CD8-positive, alpha-beta T cell (primary cell): ENCODE measurements at regions of chr19 and their contacts with region 1.

Region 1: DNA sequence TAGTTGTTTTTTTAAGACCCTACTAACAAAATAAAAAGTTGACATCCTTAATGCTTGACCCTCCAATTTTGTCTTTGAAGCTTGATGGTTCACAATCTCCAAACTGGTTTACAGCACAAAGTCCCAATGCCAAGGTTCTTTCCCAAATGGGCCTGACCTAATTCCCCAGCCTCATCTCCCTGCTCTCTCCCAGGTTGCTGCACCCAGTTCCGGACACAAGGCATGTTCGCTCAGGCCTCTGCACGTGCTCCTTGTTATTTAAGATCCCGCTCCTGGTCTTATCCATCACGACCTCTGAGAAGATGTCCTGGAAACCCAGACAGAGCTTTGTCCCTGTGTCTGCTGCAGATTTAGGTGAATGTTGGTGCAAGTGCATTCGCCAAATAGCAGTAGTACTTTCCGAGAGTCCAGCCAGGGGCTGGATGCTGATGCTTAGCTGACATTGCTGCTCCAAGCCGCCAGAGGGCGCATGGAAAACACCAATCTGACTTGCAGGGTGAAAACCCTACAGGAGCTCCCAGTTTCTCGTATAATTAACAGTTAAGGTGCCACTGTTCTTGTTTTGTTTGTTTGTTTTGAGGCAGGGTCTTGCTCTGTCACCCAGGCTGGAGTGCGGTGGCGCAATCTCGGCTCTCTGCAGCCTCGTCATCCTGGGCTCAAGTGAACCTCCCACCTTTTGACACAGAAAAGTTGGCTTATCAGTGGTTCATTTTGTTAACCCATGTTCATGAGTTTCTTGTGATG is 18.5 kb downstream of the LYPD3 start:
- DNase-seq: peak; percentile 58 to 91 (median 82)
- ATAC-seq: peak; percentile 89
- H3K4me3 ChIP-seq: no peak overlapping the region
- H3K4me3 Mint-ChIP-seq: no peak overlapping the region
- H3K27ac ChIP-seq: no peak overlapping the region
- H3K27ac Mint-ChIP-seq: peak overlapping the region; percentile 87
- H3K4me1 ChIP-seq: peaks cover 5% of the 10 kb centered on the region
- H3K4me1 Mint-ChIP-seq: peaks cover 23% of the 10 kb centered on the region
- H3K27me3 ChIP-seq: no peaks in the 10 kb centered on the region
- H3K27me3 Mint-ChIP-seq: no peaks in the 10 kb centered on the region
- CTCF ChIP-seq: peak; percentile 97

Region 2: GRCh38 chr19:43457809-43458208 is 10.9 kb after region 1 on chr19:
- CTCF ChIA-PET with region 1: interaction called, 40 read pairs
- POLR2A ChIA-PET with region 1: no interaction called
- intact Hi-C with region 1: no loop called
- DNase-seq: no peak
- ATAC-seq: no peak
- H3K4me3 ChIP-seq: no peak overlapping the region
- H3K4me3 Mint-ChIP-seq: no peak overlapping the region
- H3K27ac ChIP-seq: no peak overlapping the region
- H3K27ac Mint-ChIP-seq: no peak overlapping the region
- H3K4me1 ChIP-seq: peaks cover 8% of the 10 kb centered on the region
- H3K4me1 Mint-ChIP-seq: peaks cover 18% of the 10 kb centered on the region
- H3K27me3 ChIP-seq: no peaks in the 10 kb centered on the region
- H3K27me3 Mint-ChIP-seq: no peaks in the 10 kb centered on the region
- CTCF ChIP-seq: no peak

Region 3: GRCh38 chr19:43474986-43475705 is 28.2 kb after region 1 on chr19:
- CTCF ChIA-PET with region 1: interaction called, 16 read pairs
- POLR2A ChIA-PET with region 1: interaction called, 7 read pairs
- intact Hi-C with region 1: loop called in 1 of 2 experiments (anchors 1 kb)
- DNase-seq: peak; percentile 92 to 99 (median 96)
- ATAC-seq: peak; percentile 84
- H3K4me3 ChIP-seq: peak overlapping the region; percentile 8 to 48
- H3K4me3 Mint-ChIP-seq: peak overlapping the region; percentile 82
- H3K27ac ChIP-seq: peak overlapping the region; percentile 72 to 89
- H3K27ac Mint-ChIP-seq: peak overlapping the region; percentile 97
- H3K4me1 ChIP-seq: peaks cover 48% of the 10 kb centered on the region
- H3K4me1 Mint-ChIP-seq: peaks cover 42% of the 10 kb centered on the region
- H3K27me3 ChIP-seq: no peaks in the 10 kb centered on the region
- H3K27me3 Mint-ChIP-seq: no peaks in the 10 kb centered on the region
- CTCF ChIP-seq: no peak

Region 4: DNA sequence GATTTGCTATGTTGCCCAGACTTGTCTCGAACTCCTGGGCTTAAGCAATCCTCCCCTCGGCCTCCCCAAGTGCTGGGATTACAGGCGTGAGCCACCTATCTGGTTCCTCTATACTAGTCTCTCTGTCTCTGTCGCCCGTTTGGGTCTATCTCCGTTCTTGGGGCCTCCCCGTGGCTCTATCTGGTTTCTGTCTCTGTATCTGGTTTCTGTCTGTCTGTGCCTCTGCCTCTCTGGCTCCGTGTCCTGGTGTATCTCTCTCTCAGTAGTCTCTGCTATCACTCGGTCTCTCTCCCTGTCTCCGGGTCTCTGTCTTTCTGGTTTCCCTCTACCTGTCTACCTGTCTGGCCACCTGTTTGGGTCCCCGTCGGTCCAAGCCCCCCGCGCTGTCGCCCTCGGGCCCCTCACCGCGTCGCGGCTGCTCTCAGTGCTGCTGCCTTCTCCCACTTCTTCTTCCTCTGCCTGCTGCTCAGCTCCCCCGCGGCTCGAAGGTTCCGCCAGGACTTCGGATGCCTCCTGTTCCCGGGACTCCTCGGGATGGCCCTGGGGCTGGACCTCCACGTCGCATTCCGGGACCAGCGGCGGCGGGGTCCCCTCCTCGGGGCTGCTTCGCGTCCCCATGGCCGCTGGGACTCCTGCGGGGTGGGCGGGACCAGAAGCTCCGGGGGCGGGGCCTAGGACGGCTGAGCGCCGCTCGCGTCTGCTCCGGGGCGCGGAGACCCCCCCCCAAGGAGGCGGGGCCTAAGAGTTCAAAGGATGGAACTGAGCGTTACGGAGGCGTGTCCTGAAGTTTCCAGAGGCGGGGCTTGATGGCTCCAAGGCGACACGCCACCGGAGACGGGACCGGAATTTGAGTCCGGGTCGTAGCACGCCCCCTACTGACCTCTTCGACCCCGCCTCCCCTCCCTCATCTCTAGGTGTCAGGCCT is 56.8 kb after region 1 on chr19:
- CTCF ChIA-PET with region 1: interaction called, 38 read pairs
- POLR2A ChIA-PET with region 1: interaction called, 12 read pairs
- intact Hi-C with region 1: loop called (anchors 1 kb)
- DNase-seq: peak; percentile 98 to 100 (median 99)
- ATAC-seq: peak; percentile 95
- H3K4me3 ChIP-seq: peak overlapping the region; percentile 97
- H3K4me3 Mint-ChIP-seq: peak overlapping the region; percentile 97
- H3K27ac ChIP-seq: peak overlapping the region; percentile 84 to 86
- H3K27ac Mint-ChIP-seq: peak overlapping the region; percentile 96
- H3K4me1 ChIP-seq: peaks cover 19% of the 10 kb centered on the region
- H3K4me1 Mint-ChIP-seq: peaks cover 34% of the 10 kb centered on the region
- H3K27me3 ChIP-seq: no peaks in the 10 kb centered on the region
- H3K27me3 Mint-ChIP-seq: no peaks in the 10 kb centered on the region
- CTCF ChIP-seq: no peak

Region 5: DNA sequence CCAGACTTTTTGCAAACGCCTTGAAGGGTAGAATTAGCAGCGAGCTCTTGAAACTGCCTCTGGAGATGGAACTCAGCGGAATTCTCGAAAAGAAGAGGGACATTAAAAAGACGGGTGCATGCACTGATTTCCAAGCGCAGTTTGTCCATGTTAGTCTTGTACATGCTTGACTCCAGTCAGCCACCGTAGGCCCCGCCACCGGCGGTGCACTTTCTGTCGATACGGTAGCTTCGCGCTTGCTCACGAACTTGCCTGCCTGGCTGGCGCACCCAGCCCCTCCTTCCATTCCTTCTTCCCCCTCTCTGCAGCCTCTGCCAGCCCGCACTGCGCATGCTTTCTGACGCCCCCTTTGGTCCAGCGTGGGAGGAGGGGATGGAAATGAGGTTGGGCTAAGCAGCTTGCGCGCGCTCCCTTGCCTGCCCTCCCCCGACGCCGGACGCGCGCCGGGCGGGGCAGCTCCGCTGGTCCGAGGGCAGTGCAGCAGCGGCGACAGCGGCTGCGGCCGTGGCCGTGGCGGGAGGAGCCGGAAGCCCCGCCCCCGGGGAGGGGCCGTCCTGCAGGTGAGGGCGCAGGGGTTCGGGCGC is 86.1 kb after region 1 on chr19 and contains the start of gene ZNF575:
- CTCF ChIA-PET with region 1: interaction called, 18 read pairs
- POLR2A ChIA-PET with region 1: interaction called, 4 read pairs
- intact Hi-C with region 1: no loop called
- DNase-seq: peak; percentile 63 to 94 (median 87)
- ATAC-seq: peak; percentile 43
- H3K4me3 ChIP-seq: peak within 1 kb of the TSS; percentile 65 to 79
- H3K4me3 Mint-ChIP-seq: peak within 1 kb of the TSS; percentile 98
- H3K27ac ChIP-seq: peak within 1 kb of the TSS; percentile 55 to 76
- H3K27ac Mint-ChIP-seq: peak within 1 kb of the TSS; percentile 97
- H3K4me1 ChIP-seq: peaks cover 7% of the 10 kb centered on the region
- H3K4me1 Mint-ChIP-seq: peaks cover 19% of the 10 kb centered on the region
- H3K27me3 ChIP-seq: no peaks in the 10 kb centered on the region
- H3K27me3 Mint-ChIP-seq: no peaks in the 10 kb centered on the region
- CTCF ChIP-seq: no peak
- total RNA-seq, gene ZNF575: 2.4 to 3.4 TPM

Region 6: GRCh38 chr19:43678512-43679261 is 231.8 kb after region 1 on chr19:
- CTCF ChIA-PET with region 1: no interaction called
- POLR2A ChIA-PET with region 1: no interaction called
- intact Hi-C with region 1: no loop called
- DNase-seq: no peak
- ATAC-seq: no peak
- H3K4me3 ChIP-seq: no peak overlapping the region
- H3K4me3 Mint-ChIP-seq: no peak overlapping the region
- H3K27ac ChIP-seq: no peak overlapping the region
- H3K27ac Mint-ChIP-seq: no peak overlapping the region
- H3K4me1 ChIP-seq: no peaks in the 10 kb centered on the region
- H3K4me1 Mint-ChIP-seq: peaks cover 4% of the 10 kb centered on the region
- H3K27me3 ChIP-seq: no peaks in the 10 kb centered on the region
- H3K27me3 Mint-ChIP-seq: no peaks in the 10 kb centered on the region
- CTCF ChIP-seq: no peak

Region 7: DNA sequence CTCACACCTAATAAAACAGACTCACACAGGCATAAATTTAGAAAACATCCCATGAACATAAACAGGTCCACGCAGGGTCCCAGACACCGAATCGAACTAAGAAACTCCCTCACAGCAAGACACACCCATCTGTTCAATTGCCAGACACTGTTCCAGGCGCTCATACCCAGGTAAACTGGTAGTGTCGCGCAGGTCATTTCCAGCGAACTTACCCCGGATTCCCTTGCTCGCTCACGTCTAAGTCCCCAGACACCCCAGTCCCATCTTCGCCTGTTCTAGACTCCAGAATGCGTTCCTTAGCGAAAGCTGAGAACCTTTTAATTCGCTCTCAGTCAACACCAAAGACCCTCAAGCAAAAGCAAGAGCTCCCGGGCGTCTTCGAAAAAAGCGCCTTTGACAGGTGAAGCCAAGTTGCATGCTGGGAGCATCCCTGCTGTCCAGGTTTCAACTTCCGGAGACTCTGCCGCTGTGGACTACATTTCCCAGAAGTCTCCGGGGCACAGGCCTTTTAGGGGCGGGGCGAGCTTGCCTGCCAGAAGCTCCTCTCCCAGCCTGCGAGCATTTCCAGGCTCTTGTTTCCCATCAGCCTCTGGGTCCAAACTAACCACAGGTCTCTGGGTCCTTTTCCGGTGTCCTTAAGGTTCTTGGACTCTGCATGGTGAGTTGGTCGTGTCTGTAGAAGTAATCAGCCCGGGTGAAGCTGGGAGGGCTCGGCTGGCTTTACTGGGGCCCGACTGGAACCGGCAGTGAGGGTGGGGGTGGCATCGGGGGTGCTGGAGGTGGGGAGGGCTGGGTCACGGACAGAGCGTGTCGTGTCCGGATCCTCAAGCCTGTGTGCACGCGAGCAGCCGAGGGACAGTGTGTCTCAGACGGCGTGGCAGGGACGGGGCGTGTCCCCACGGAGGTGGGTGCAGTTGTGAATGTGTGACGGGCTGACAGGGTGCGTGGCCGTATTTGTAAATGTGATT is 380.2 kb after region 1 on chr19 and contains the start of gene ZNF283:
- CTCF ChIA-PET with region 1: no interaction called
- POLR2A ChIA-PET with region 1: no interaction called
- intact Hi-C with region 1: no loop called
- DNase-seq: peak; percentile 64 to 90 (median 81)
- ATAC-seq: peak; percentile 92
- H3K4me3 ChIP-seq: peak within 1 kb of the TSS; percentile 52 to 69
- H3K4me3 Mint-ChIP-seq: peak within 1 kb of the TSS; percentile 88
- H3K27ac ChIP-seq: no peak within 1 kb of the TSS
- H3K27ac Mint-ChIP-seq: peak within 1 kb of the TSS; percentile 39
- H3K4me1 ChIP-seq: peaks cover 12% of the 10 kb centered on the region
- H3K4me1 Mint-ChIP-seq: peaks cover 22% of the 10 kb centered on the region
- H3K27me3 ChIP-seq: no peaks in the 10 kb centered on the region
- H3K27me3 Mint-ChIP-seq: peaks cover 8% of the 10 kb centered on the region
- CTCF ChIP-seq: no peak
- total RNA-seq, gene ZNF283: 1.3 to 1.4 TPM